ENCODE measurements at regions of chr16 and their contacts with region 1.

Region 1: GRCh38 chr16:3059000-3059722 is 6.3 kb upstream of the IL32 start:
- DNase-seq: peak; percentile 92 to 94
- ATAC-seq: peak; percentile 93 to 96 (median 94)
- H3K4me3 ChIP-seq: peak overlapping the region; percentile 46 to 95 (median 86)
- H3K27ac ChIP-seq: peak overlapping the region; percentile 14 to 97 (median 90)
- H3K4me1 ChIP-seq: peaks cover 7 to 71% (median 22%) of the 10 kb centered on the region in 9 donors
- H3K27me3 ChIP-seq: no peaks in the 10 kb centered on the region
- CTCF ChIP-seq: peak; percentile 92 to 99 (median 96)

Region 2: DNA sequence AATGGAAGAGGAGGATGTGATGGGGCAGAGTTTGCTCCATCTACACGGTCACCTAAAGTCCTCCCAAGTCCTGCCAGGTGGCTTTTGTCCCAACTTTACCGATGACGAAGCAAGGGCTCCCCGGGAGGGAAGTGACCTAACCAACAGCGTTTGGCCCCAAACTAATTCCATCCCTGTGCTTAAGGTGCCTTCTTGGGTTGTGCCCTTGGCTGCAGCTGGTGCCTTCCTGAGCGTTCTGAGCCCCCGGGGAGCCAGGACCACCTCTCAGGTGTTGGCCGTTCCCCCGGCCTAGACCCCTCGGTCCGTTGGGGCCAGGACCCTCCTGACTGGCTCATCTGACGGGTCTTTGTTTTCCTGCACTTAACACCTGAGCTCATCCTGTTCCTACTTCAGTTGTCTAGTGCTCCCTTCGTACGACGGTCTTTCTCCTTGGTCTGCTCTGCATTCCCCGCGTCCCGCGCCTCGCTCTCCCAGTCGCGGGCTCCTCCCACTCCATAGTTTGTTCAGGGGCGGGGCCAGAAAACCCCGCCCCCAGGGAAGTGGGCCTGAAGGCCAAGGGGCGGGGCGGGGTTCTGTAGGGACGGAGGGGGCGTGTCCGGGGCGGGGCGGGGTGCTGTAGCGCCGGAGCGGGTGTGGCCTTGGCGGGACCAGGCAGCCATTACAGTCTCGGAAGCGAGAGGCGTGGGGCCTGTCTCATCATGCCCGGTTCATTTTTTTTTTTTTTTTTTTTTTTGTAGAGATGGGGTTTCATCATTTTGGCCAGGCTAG is 40.8 kb after region 1 on chr16:
- intact Hi-C with region 1: loop called in 5 of 10 experiments (anchors 5 kb)
- DNase-seq: peak; percentile 93 to 94
- ATAC-seq: peak; percentile 89 to 95 (median 94)
- H3K4me3 ChIP-seq: peak overlapping the region in 6 of 10 donors; percentile 11 to 43 (median 35)
- H3K27ac ChIP-seq: peak overlapping the region in 9 of 10 donors; percentile 49 to 90 (median 82)
- H3K4me1 ChIP-seq: peaks cover 6 to 55% (median 34%) of the 10 kb centered on the region in 9 donors
- H3K27me3 ChIP-seq: peaks cover 0 to 4% (median 0%) of the 10 kb centered on the region in 7 donors
- CTCF ChIP-seq: no peak

Region 3: DNA sequence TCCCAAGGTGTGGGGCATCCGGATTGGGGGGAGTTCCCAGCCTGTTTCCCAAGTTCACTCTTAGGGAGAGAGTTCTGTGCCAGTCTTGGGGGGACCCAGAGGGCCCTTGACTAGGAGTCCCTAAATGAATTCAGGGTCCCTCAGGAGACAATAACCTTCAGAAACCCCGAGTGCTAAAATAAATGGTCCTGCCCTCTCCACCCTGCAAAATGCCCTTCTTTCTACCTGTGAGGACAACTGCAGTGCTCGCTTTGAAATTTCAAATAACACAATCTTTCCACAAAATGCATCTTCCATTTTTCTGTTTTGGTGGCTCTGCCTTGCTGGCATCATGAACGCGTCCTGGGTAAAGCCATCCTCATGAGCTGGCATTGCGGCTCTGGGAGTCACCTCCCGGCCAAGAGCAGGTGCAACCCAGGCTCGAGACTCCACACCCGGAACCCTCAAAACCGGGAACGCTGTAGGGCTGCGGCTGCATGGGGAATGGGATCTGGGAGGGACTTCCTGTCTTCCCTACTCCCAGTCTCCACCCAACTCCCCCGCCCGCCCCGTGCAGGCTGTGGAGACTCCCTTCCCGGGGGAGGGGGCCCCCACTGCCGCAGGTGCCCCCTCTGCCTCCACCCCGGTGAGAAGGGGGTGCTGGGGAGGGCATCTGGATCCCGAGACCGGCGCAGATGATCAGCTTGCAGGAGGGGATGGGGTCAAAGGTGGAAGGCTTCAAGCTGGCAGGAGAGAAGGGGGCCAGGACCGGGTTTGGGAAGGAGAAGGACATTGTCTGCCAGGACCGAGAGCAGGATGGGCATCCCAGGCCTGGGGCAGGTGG is 53.1 kb after region 1 on chr16 and contains the start of gene ZNF205:
- intact Hi-C with region 1: loop called in 3 of 10 experiments (anchors 5 to 10 kb)
- DNase-seq: peak; percentile 79 to 80
- ATAC-seq: peak; percentile 87 to 96 (median 94)
- H3K4me3 ChIP-seq: peak within 1 kb of the TSS; percentile 64 to 97 (median 84)
- H3K27ac ChIP-seq: peak within 1 kb of the TSS; percentile 18 to 93 (median 81)
- H3K4me1 ChIP-seq: peaks cover 12 to 42% (median 31%) of the 10 kb centered on the region in 9 donors
- H3K27me3 ChIP-seq: no peaks in the 10 kb centered on the region
- CTCF ChIP-seq: no peak
- total RNA-seq, gene ZNF205: 5.8 to 9.0 (median 7.6) TPM

Region 4: DNA sequence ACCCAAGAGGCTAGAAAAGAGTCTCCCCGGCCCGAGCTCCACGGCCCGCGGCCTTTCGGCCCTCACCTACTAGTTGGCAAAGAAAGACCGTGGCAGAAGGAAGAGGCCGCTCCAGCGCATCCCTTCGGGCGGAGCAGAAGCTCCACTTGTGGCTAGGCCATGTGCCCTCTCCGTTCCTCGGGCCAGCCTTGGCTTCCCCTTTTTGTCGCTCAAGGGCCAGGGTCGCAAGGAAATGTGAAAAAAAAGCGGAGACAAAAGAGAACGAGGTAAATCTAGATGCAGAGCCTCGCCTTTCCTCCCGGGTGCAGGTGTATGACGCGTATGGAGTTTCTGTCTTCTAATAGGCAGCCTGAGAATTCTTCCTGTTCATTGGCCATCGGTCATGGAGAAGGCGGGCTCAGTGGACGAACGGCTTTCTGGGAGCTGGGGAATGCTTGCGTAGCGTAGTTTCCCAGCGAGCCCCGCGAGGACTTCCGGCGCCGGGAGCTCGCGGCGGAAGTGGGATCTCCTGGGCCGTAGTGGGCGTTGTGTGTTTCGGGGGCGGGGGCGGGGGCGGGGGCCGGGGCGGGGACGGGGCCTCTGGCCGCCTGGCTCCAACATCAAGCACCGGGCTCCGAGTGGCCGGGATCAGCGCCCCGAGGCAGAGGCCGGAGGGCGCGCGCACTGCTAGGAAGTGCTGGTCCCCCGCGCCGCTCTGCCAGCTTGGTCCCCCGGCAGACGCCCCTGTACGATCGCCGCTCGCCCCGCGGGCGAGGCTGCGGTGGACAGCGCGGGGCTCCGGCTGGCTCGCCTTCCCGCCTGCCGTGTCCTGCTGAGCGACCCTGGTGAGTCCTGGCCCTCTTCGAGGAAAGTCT is 75.6 kb after region 1 on chr16 and contains the start of gene ZNF213:
- intact Hi-C with region 1: loop called in 7 of 10 experiments (anchors 1 to 5 kb)
- DNase-seq: peak; percentile 92 to 97
- ATAC-seq: peak; percentile 91 to 98 (median 97)
- H3K4me3 ChIP-seq: peak within 1 kb of the TSS; percentile 66 to 99 (median 88)
- H3K27ac ChIP-seq: peak within 1 kb of the TSS; percentile 71 to 98 (median 92)
- H3K4me1 ChIP-seq: peaks cover 3 to 40% (median 30%) of the 10 kb centered on the region in 9 donors
- H3K27me3 ChIP-seq: no peaks in the 10 kb centered on the region
- CTCF ChIP-seq: peak in 2 of 9 donors; percentile 3 to 5
- total RNA-seq, gene ZNF213: 5.9 to 9.2 (median 7.7) TPM

Region 5: DNA sequence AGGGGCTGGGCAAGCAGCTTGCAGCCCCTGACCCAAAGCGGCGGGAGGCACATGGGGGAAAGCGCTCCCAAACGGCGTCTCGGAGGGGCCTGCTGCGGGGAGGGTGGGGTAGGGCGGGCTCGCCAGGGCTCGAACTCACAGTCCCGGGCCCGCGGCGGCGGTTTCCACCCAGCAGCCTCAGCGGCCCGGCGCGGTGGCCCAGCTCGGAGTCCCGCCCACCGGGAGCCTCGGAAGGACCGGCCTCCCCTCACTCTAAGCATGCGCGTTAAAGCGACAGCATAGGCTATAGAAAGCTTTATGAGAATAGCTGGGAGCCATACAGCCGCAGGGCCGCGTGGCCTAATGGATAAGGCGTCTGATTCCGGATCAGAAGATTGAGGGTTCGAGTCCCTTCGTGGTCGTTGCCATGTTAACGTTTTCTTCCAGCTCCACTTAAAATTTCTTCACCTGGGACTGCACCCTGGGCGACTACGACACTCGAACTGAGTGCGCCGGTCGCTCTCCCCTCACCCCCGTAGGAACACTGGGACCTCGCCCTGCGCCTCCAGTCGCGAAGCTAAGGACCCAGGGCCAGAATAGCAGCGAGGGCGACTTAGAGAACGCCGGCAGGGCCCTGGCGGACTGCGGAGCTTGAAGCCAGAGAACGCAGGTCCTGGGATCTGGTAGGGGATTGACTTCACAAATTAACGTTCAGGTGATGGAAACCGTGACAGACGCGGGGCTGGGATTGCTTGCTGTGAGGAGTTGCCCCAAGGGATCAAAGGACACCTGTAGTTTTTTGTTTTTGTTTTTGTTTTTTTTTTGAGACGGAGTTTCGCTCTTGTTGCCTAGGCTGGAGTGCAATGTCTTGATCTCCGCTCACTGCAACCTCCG is 91.4 kb after region 1 on chr16:
- intact Hi-C with region 1: no loop called
- DNase-seq: peak; percentile 93 to 94
- ATAC-seq: peak; percentile 91 to 95 (median 94)
- H3K4me3 ChIP-seq: peak overlapping the region; percentile 53 to 78 (median 70)
- H3K27ac ChIP-seq: peak overlapping the region; percentile 59 to 93 (median 87)
- H3K4me1 ChIP-seq: peaks cover 2 to 38% (median 21%) of the 10 kb centered on the region in 9 donors
- H3K27me3 ChIP-seq: peaks cover 0 to 14% (median 0%) of the 10 kb centered on the region in 7 donors
- CTCF ChIP-seq: no peak

Region 6: GRCh38 chr16:3166510-3166895 is 107.3 kb after region 1 on chr16:
- intact Hi-C with region 1: loop called in 6 of 10 experiments (anchors 2 to 10 kb)
- DNase-seq: no peak
- ATAC-seq: no peak
- H3K4me3 ChIP-seq: no peak overlapping the region
- H3K27ac ChIP-seq: no peak overlapping the region
- H3K4me1 ChIP-seq: peaks cover 0 to 21% (median 17%) of the 10 kb centered on the region in 9 donors
- H3K27me3 ChIP-seq: peaks cover 8 to 49% (median 38%) of the 10 kb centered on the region in 7 donors
- CTCF ChIP-seq: no peak

Measured in heart right ventricle (tissue), 16 donors.